H1 (cell line): ENCODE measurements at regions of chr13 and their contacts with region 1.

Region 1: DNA sequence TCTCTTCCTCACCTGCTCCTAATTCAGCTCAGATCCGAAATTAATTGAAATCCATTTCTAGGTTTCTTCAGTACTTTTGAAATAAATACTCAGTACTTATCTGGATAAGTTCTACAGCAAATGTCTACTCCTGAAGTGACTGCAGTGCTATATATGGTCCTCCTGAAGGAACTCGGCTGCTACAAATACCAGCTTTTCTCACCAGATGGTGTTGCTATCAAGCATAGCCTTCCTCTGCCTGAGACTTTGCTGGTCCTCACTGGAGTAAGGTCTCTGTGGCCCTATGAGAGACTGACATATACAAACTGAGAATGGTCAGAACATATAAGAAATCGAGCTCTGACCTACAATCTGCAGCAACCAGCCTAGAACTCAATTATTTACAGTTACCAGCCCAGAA is 161.6 kb downstream of the NDFIP2 start:
- DNase-seq: no peak
- H3K4me3 ChIP-seq: no peak overlapping the region
- H3K27ac ChIP-seq: no peak overlapping the region
- H3K4me1 ChIP-seq: no peaks in the 10 kb centered on the region
- H3K27me3 ChIP-seq: no peaks in the 10 kb centered on the region
- CTCF ChIP-seq: peak in 1 of 3 experiments; percentile 3; a peak in 1 of 4 replicates
- EP300 ChIP-seq: no peak
- POLR2A ChIP-seq: no peak
- RAD21 ChIP-seq: peak; percentile 32 to 54; a peak in 3 of 4 replicates

Region 2: DNA sequence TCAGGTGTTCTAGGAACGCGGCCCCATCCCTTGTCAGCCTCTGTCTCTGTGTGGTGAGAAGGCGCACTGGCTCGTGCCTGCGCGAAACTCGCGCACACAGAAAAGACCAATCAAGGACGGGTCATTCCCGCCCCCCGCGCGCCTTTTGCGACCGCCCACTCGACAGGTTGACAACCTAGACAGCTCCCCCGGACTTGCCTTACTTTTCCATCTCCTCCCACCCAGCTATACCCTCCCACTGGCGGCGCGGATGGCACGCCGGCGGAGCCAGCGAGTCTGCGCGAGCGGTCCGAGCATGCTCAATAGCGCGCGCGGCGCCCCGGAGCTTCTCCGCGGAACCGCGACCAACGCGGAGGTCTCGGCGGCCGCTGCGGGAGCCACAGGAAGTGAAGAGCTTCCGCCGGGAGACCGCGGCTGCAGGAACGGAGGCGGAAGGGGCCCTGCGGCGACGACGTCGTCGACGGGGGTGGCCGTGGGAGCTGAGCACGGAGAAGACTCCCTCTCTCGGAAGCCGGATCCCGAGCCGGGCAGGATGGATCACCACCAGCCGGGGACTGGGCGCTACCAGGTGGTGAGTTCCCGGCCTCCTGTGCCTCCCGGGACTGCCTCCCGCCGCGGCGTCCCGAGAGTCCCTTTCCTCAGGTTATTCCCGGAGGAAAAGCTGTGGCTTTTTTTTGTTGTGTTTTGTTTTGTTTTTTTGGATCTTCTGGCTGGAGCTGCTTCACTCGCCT is 161.5 kb before region 1 on chr13 and contains the start of gene NDFIP2:
- CTCF ChIA-PET with region 1: no interaction called
- POLR2A ChIA-PET with region 1: no interaction called
- DNase-seq: peak; percentile 25 to 88
- H3K4me3 ChIP-seq: peak within 1 kb of the TSS; percentile 62 to 86 (median 84)
- H3K27ac ChIP-seq: no peak within 1 kb of the TSS
- H3K4me1 ChIP-seq: peaks cover 0 to 3% (median 1%) of the 10 kb centered on the region in 4 experiments; a peak in 2 of 7 replicates
- H3K27me3 ChIP-seq: no peaks in the 10 kb centered on the region; a peak in 1 of 7 replicates
- CTCF ChIP-seq: no peak
- EP300 ChIP-seq: no peak
- POLR2A ChIP-seq: 0 out of 3 replicates have a peak, but pooled peaks of 1 of the 2 experiments have one; percentile 45
- RAD21 ChIP-seq: no peak
- total RNA-seq, gene NDFIP2: 30.4 and 32.9 TPM in 2 replicates

Region 3: GRCh38 chr13:79631051-79631659 is 11.4 kb before region 1 on chr13:
- CTCF ChIA-PET with region 1: interaction called, 11 read pairs
- POLR2A ChIA-PET with region 1: no interaction called
- DNase-seq: no peak
- H3K4me3 ChIP-seq: no peak overlapping the region
- H3K27ac ChIP-seq: no peak overlapping the region
- H3K4me1 ChIP-seq: no peaks in the 10 kb centered on the region
- H3K27me3 ChIP-seq: no peaks in the 10 kb centered on the region
- CTCF ChIP-seq: no peak; a peak in 1 of 4 replicates
- EP300 ChIP-seq: no peak
- POLR2A ChIP-seq: no peak
- RAD21 ChIP-seq: peak; percentile 29 to 44

Region 4: GRCh38 chr13:79659121-79659521 is 16.5 kb after region 1 on chr13:
- CTCF ChIA-PET with region 1: interaction called, 10 read pairs
- POLR2A ChIA-PET with region 1: no interaction called
- DNase-seq: no peak
- H3K4me3 ChIP-seq: no peak overlapping the region
- H3K27ac ChIP-seq: no peak overlapping the region
- H3K4me1 ChIP-seq: peaks cover 0 to 5% (median 2%) of the 10 kb centered on the region in 4 experiments; a peak in 3 of 7 replicates
- H3K27me3 ChIP-seq: peaks cover 0 to 1% (median 0%) of the 10 kb centered on the region in 4 experiments; a peak in 1 of 7 replicates
- CTCF ChIP-seq: no peak
- EP300 ChIP-seq: no peak
- POLR2A ChIP-seq: no peak
- RAD21 ChIP-seq: no peak

Region 5: DNA sequence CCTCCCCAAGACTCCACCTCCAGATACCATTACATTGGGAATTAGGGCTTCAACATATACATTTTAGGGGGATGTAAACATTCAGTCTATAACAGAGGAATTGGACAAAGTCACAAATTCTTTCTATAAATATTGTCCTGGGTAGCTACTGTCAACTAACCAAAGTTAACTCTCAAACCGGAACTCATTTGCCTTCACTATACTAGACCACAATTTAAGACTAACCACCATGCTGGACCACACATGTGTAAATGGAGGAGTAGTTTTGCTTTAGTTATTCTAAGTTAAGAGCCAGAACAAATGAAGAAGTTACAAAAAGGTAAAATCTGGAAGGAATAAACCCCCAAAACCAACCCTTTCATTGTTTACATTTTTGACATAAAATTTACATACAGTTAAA is 61.2 kb after region 1 on chr13:
- CTCF ChIA-PET with region 1: no interaction called
- POLR2A ChIA-PET with region 1: no interaction called
- DNase-seq: no peak
- H3K4me3 ChIP-seq: no peak overlapping the region
- H3K27ac ChIP-seq: no peak overlapping the region
- H3K4me1 ChIP-seq: no peaks in the 10 kb centered on the region
- H3K27me3 ChIP-seq: no peaks in the 10 kb centered on the region
- CTCF ChIP-seq: no peak
- EP300 ChIP-seq: no peak
- POLR2A ChIP-seq: no peak
- RAD21 ChIP-seq: no peak